B cell (primary cell): ENCODE measurements at regions of chr5 and their contacts with region 1.

Region 1: GRCh38 chr5:89445106-89445745 is 562.2 kb upstream of the MEF2C start:
- DNase-seq: no peak
- ATAC-seq: no peak
- H3K4me3 ChIP-seq: peak overlapping the region in 1 of 5 experiments; percentile 42
- H3K4me3 Mint-ChIP-seq: peak overlapping the region; percentile 47
- H3K27ac ChIP-seq: peak overlapping the region; percentile 72 to 89
- H3K27ac Mint-ChIP-seq: peak overlapping the region; percentile 88
- H3K4me1 ChIP-seq: peaks cover 66 to 91% of the 10 kb centered on the region in 2 donors
- H3K4me1 Mint-ChIP-seq: peaks cover 72% of the 10 kb centered on the region
- H3K27me3 ChIP-seq: no peaks in the 10 kb centered on the region
- H3K27me3 Mint-ChIP-seq: no peaks in the 10 kb centered on the region
- CTCF ChIP-seq: no peak

Region 2: GRCh38 chr5:88826646-88827585 is 618.3 kb before region 1 on chr5:
- CTCF ChIA-PET with region 1: no interaction called
- POLR2A ChIA-PET with region 1: interaction called, 3 read pairs
- intact Hi-C with region 1: loop called (anchors 5 kb)
- DNase-seq: peak; percentile 96
- ATAC-seq: peak; percentile 79
- H3K4me3 ChIP-seq: peak overlapping the region; percentile 3 to 61 (median 35)
- H3K4me3 Mint-ChIP-seq: peak overlapping the region; percentile 78
- H3K27ac ChIP-seq: peak overlapping the region; percentile 92 to 94
- H3K27ac Mint-ChIP-seq: peak overlapping the region; percentile 94
- H3K4me1 ChIP-seq: peaks cover 74 to 94% of the 10 kb centered on the region in 2 donors
- H3K4me1 Mint-ChIP-seq: peaks cover 83% of the 10 kb centered on the region
- H3K27me3 ChIP-seq: no peaks in the 10 kb centered on the region
- H3K27me3 Mint-ChIP-seq: no peaks in the 10 kb centered on the region
- CTCF ChIP-seq: no peak

Region 3: DNA sequence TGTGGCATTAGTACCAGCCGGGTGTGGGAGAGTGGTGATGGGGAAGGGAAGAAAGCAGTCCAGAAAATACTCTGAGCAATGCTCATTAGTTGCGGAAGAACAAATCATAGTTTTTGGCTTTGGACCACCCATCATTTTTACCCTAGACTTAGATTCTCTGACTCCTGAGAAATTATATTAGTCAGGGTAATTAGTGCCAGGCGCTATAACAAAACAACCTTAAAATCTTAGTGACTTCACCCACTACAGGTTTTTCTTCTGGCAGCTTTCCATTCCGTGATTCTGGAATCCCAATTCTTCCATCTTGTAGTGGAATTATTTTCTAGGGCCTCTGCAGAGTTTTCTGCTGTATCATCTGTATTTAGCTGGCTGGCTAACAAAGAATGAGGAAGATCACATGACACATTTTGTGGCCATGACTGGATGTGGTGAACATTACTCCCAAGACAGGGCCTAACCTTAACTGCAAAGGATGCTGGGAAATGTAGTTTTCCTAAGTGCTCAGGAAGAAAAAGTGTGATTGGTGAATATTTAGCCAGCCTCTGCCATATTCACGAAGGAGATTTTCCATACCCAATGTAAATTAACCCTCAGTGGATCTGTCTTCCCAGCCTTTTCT is 189.3 kb before region 1 on chr5:
- CTCF ChIA-PET with region 1: no interaction called
- POLR2A ChIA-PET with region 1: no interaction called
- intact Hi-C with region 1: no loop called
- DNase-seq: peak; percentile 27
- ATAC-seq: no peak
- H3K4me3 ChIP-seq: no peak overlapping the region
- H3K4me3 Mint-ChIP-seq: no peak overlapping the region
- H3K27ac ChIP-seq: no peak overlapping the region
- H3K27ac Mint-ChIP-seq: no peak overlapping the region
- H3K4me1 ChIP-seq: peaks cover 12 to 19% of the 10 kb centered on the region in 2 donors
- H3K4me1 Mint-ChIP-seq: peaks cover 28% of the 10 kb centered on the region
- H3K27me3 ChIP-seq: no peaks in the 10 kb centered on the region
- H3K27me3 Mint-ChIP-seq: no peaks in the 10 kb centered on the region
- CTCF ChIP-seq: no peak

Region 4: GRCh38 chr5:89268460-89268859 is 176.8 kb before region 1 on chr5:
- CTCF ChIA-PET with region 1: no interaction called
- POLR2A ChIA-PET with region 1: no interaction called
- intact Hi-C with region 1: loop called (anchors 5 kb)
- DNase-seq: peak; percentile 62
- ATAC-seq: peak; percentile 45
- H3K4me3 ChIP-seq: peak overlapping the region in 1 of 5 experiments; percentile 6
- H3K4me3 Mint-ChIP-seq: peak overlapping the region; percentile 51
- H3K27ac ChIP-seq: peak overlapping the region; percentile 74 to 85
- H3K27ac Mint-ChIP-seq: peak overlapping the region; percentile 82
- H3K4me1 ChIP-seq: peaks cover 71 to 75% of the 10 kb centered on the region in 2 donors
- H3K4me1 Mint-ChIP-seq: peaks cover 71% of the 10 kb centered on the region
- H3K27me3 ChIP-seq: no peaks in the 10 kb centered on the region
- H3K27me3 Mint-ChIP-seq: no peaks in the 10 kb centered on the region
- CTCF ChIP-seq: no peak

Region 5: GRCh38 chr5:89303033-89303480 is 142.2 kb before region 1 on chr5:
- CTCF ChIA-PET with region 1: no interaction called
- POLR2A ChIA-PET with region 1: no interaction called
- intact Hi-C with region 1: loop called (anchors 5 kb)
- DNase-seq: peak; percentile 42
- ATAC-seq: peak; percentile 52
- H3K4me3 ChIP-seq: no peak overlapping the region
- H3K4me3 Mint-ChIP-seq: peak overlapping the region; percentile 56
- H3K27ac ChIP-seq: peak overlapping the region; percentile 11 to 80
- H3K27ac Mint-ChIP-seq: peak overlapping the region; percentile 89
- H3K4me1 ChIP-seq: peaks cover 36 to 41% of the 10 kb centered on the region in 2 donors
- H3K4me1 Mint-ChIP-seq: peaks cover 52% of the 10 kb centered on the region
- H3K27me3 ChIP-seq: no peaks in the 10 kb centered on the region
- H3K27me3 Mint-ChIP-seq: no peaks in the 10 kb centered on the region
- CTCF ChIP-seq: no peak

Region 6: GRCh38 chr5:89396278-89396954 is 48.8 kb before region 1 on chr5:
- CTCF ChIA-PET with region 1: no interaction called
- POLR2A ChIA-PET with region 1: no interaction called
- intact Hi-C with region 1: loop called (anchors 2 kb)
- DNase-seq: peak; percentile 50
- ATAC-seq: peak; percentile 71
- H3K4me3 ChIP-seq: peak overlapping the region in 1 of 5 experiments; percentile 13
- H3K4me3 Mint-ChIP-seq: peak overlapping the region; percentile 70
- H3K27ac ChIP-seq: peak overlapping the region; percentile 77 to 89
- H3K27ac Mint-ChIP-seq: peak overlapping the region; percentile 92
- H3K4me1 ChIP-seq: peaks cover 37 to 49% of the 10 kb centered on the region in 2 donors
- H3K4me1 Mint-ChIP-seq: peaks cover 58% of the 10 kb centered on the region
- H3K27me3 ChIP-seq: no peaks in the 10 kb centered on the region
- H3K27me3 Mint-ChIP-seq: no peaks in the 10 kb centered on the region
- CTCF ChIP-seq: no peak

Region 7: DNA sequence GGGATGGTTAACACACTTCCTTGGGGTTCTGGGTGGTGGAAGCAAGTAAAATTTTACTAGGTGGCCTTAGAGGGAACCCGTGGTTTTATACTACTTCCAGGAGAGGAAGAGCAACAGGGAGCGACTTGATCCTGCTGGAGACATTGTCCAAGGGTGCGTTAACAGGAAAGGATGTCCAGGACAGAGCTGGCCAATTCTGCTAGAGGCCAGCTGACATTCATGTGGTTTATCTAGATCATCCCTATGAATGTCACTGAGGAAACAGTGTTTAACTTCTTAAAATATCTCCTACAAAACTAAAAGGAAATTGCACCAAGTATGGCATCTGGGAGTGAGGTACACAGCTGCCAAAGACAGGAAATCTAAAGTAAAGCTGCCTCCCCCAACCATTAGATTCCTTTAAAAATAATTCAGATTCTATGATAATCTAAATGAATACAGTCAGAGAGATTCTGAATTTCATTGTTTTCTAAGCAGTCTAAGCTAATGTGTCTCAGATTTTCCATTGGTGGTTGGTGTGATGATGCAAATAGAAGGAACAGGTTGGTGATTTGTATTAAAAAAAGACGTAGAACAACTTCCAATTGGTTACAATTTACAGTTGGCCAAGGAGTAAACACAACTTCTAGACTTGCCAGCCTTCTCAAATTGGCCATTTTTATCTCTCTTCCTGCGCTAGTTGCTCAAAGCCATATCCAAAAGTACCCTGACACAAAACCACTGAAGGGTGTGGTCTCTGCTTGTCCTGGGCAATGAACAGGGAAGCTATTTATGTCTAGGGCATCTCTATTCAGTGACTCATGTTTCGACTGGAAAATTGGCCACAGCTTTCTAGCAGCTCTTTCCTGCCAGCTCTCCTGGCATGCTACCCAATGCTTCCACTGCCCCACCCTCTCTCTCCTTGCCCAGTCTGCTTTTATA is 12.4 kb after region 1 on chr5:
- CTCF ChIA-PET with region 1: interaction called, 3 read pairs
- POLR2A ChIA-PET with region 1: no interaction called
- intact Hi-C with region 1: loop called (anchors 2 kb)
- DNase-seq: no peak
- ATAC-seq: peak; percentile 42
- H3K4me3 ChIP-seq: peak overlapping the region in 1 of 5 experiments; percentile 26
- H3K4me3 Mint-ChIP-seq: peak overlapping the region; percentile 60
- H3K27ac ChIP-seq: peak overlapping the region; percentile 47 to 82
- H3K27ac Mint-ChIP-seq: peak overlapping the region; percentile 90
- H3K4me1 ChIP-seq: peaks cover 31 to 45% of the 10 kb centered on the region in 2 donors
- H3K4me1 Mint-ChIP-seq: peaks cover 50% of the 10 kb centered on the region
- H3K27me3 ChIP-seq: no peaks in the 10 kb centered on the region
- H3K27me3 Mint-ChIP-seq: no peaks in the 10 kb centered on the region
- CTCF ChIP-seq: no peak